Activated T-helper 2 cell treated with anti-CD3 and anti-CD28 coated beads, Interferon-gamma antibody, Interleukin-2, Interleukin-4, amounts not matched to agents 10 μg/mL and 5 μg/mL and 100 μg/mL, durations not matched to agents 14 hours and 24 hours and 36 hours (primary cell): ENCODE measurements at regions of chr2 and their contacts with region 1.

Region 1: DNA sequence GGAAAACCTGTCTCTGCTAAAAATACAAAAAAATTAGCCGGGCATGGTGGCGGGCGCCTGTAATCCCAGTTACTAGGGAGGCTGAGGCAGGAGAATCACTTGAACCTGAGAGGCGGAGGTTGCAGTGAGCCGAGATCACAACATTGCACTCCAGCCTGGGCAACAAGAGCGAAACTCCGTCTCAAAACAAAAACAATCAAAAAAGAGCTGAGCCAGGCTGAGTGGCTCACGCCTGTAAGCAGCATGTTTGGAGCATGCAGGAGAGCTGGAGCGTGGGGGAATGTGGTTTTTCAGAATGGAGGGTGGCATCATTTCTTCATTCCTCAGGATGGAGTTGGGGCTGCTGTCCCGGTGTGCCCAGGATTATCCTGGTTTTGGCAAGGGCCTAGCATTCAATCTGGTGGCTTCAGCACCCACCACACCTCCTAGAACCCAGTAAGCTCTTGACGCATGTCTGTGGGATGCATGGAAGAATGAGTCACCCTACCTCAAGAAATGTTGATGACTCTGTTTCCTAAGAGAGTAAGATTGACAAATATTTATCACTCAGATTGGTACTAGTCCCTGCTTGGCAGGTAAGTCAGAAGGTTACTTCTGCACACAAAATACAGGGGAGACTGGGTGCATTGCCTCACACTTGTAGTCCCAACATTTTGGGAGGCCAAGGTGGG is 90.2 kb upstream of the ODC1 start:
- DNase-seq: no peak
- H3K4me3 Mint-ChIP-seq: no peak overlapping the region
- H3K27ac Mint-ChIP-seq: peak overlapping the region; percentile 58
- H3K4me1 Mint-ChIP-seq: peaks cover 19% of the 10 kb centered on the region
- H3K27me3 Mint-ChIP-seq: peaks cover 10% of the 10 kb centered on the region

Region 2: DNA sequence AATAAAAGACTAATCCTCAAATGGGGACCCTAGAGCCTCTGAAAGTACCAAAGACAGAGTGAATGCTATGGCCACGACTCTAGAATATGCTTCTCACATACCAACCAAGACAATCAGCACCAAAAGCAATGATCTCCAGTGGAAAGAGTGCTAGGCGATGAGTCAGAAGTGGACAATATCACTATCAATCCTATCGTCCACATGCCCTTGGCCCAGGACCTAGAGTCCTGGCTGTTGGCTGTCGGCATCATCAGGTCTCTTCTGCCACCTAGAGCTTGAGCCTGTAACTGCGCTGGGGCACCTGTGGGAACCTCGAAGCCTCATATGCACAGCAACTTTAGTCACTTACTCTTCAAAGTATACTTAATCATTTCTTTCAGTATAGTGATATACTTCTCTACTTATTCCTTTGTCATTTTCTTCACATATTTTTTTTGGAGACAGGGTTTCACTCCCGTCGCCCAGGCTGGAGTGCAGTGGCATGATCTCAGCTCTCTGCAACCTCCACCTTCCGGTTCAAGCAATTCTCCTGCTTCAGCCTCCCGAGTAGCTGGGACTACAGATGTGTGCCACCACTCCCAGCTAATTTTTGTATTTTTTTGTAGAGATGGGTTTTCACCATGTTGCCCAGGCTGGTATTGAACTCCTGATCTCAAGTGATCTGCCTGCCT is 121.7 kb after region 1 on chr2:
- intact Hi-C with region 1: loop called (anchors 10 kb)
- DNase-seq: peak; percentile 30
- H3K4me3 Mint-ChIP-seq: no peak overlapping the region
- H3K27ac Mint-ChIP-seq: peak overlapping the region; percentile 35
- H3K4me1 Mint-ChIP-seq: peaks cover 17% of the 10 kb centered on the region
- H3K27me3 Mint-ChIP-seq: no peaks in the 10 kb centered on the region